Ascending aorta (tissue), 2 donors: ENCODE measurements at regions of chr12 and their contacts with region 1.

Region 1: GRCh38 chr12:11648831-11649702 is at the start of gene ETV6:
- DNase-seq: peak in 1 of 2 donors; percentile 90
- H3K4me3 ChIP-seq: peak within 1 kb of the TSS; percentile 73 to 89
- H3K27ac ChIP-seq: peak within 1 kb of the TSS; percentile 85 to 95
- H3K4me1 ChIP-seq: peaks cover 3 to 5% of the 10 kb centered on the region in 2 donors
- H3K27me3 ChIP-seq: no peaks in the 10 kb centered on the region
- CTCF ChIP-seq: no peak
- total RNA-seq, gene ETV6: 21.6 TPM

Region 2: GRCh38 chr12:11581179-11581755 is 67.8 kb before region 1 on chr12:
- intact Hi-C with region 1: loop called (anchors 2 kb)
- DNase-seq: peak in 1 of 2 donors; percentile 81
- H3K4me3 ChIP-seq: no peak overlapping the region
- H3K27ac ChIP-seq: peak overlapping the region; percentile 69 to 82
- H3K4me1 ChIP-seq: peaks cover 6 to 31% of the 10 kb centered on the region in 2 donors
- H3K27me3 ChIP-seq: no peaks in the 10 kb centered on the region
- CTCF ChIP-seq: peak; percentile 55 to 61 (median 59)

Region 3: DNA sequence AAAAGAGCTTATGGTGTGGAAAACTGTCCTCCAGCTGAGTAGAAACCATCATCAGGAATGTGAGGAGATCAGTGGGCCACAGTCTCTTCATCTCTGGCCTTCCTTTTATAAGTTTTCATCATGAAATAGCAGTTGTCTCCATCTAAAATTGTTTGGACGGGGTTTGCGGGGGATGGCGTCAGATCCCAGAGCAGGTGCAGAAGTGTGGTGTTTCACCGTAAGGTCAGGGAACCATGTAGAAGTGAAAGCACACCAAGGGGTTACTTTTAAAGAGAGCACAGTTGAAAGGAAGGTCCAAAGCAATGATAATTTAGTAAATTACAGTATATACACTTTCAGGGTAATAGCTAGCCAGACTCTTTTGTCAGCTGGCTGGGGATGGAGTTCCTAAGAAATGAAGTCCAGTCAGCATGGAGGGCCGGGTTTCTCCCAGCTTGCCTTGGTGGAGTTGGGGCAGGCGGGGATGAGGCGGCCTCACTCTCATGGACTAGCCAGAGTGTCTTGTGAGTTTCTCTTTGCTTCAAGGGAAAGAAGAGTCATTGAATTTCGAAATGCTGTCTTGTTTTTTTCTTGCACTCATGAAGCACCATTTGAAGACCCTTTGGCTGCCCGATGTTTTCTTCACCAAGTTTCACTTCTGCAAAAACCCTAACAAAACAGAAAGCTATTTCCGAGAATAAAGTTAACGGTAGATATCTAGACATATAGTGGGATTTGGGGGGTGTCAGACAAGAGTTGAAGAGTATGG is 101.0 kb after region 1 on chr12:
- intact Hi-C with region 1: loop called (anchors 2 kb)
- DNase-seq: no peak
- H3K4me3 ChIP-seq: no peak overlapping the region
- H3K27ac ChIP-seq: peak overlapping the region in 1 of 2 donors; percentile 13
- H3K4me1 ChIP-seq: peaks cover 12 to 41% of the 10 kb centered on the region in 2 donors
- H3K27me3 ChIP-seq: no peaks in the 10 kb centered on the region
- CTCF ChIP-seq: no peak

Region 4: DNA sequence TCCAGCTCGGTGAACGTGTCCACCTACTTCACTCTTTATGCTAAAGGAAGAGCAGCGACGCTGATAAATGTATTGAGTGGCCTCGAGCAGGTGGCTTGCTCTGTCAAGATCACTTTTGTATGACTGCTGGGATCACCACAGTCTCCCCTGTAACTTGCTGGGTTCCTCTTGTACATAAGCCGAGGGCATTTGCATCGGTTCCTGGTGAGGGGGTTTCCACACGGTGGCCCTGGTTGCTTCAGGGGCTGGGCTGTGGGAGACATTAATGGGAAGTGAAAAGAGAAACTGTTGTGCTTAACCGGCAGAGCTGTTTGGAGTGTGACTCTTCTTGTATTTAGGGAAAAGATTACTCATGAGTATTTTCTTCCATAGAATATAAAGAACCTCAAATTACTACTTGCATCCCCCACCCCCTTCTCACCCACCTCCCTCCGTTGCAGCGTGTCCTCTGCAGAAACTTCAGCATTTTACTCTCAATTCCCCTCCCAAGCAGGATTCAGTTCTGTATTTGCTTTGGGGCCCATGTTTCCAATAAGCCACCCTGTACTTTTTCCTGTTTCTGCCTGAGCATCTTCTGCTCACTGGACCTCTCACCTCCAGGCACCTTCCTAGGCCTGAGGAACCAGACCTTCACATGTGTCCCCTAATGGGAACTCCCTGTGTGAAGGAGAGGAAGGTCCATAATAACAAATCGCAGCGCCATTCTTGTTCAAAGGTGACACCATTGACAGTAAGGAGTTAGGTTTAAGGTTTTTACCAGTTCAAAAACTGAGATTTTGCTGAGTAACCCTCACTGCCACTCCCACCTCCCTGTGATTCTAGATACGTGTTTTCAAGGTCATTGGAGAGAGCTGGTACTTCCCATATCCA is 187.4 kb after region 1 on chr12:
- intact Hi-C with region 1: loop called (anchors 5 kb)
- DNase-seq: peak in 1 of 2 donors; percentile 76
- H3K4me3 ChIP-seq: no peak overlapping the region
- H3K27ac ChIP-seq: peak overlapping the region; percentile 50 to 55
- H3K4me1 ChIP-seq: peaks cover 10 to 80% of the 10 kb centered on the region in 2 donors
- H3K27me3 ChIP-seq: no peaks in the 10 kb centered on the region
- CTCF ChIP-seq: no peak

Region 5: GRCh38 chr12:11855983-11856374 is 206.9 kb after region 1 on chr12:
- intact Hi-C with region 1: no loop called
- DNase-seq: no peak
- H3K4me3 ChIP-seq: no peak overlapping the region
- H3K27ac ChIP-seq: peak overlapping the region; percentile 2 to 7
- H3K4me1 ChIP-seq: no peaks in the 10 kb centered on the region
- H3K27me3 ChIP-seq: no peaks in the 10 kb centered on the region
- CTCF ChIP-seq: no peak

Region 6: DNA sequence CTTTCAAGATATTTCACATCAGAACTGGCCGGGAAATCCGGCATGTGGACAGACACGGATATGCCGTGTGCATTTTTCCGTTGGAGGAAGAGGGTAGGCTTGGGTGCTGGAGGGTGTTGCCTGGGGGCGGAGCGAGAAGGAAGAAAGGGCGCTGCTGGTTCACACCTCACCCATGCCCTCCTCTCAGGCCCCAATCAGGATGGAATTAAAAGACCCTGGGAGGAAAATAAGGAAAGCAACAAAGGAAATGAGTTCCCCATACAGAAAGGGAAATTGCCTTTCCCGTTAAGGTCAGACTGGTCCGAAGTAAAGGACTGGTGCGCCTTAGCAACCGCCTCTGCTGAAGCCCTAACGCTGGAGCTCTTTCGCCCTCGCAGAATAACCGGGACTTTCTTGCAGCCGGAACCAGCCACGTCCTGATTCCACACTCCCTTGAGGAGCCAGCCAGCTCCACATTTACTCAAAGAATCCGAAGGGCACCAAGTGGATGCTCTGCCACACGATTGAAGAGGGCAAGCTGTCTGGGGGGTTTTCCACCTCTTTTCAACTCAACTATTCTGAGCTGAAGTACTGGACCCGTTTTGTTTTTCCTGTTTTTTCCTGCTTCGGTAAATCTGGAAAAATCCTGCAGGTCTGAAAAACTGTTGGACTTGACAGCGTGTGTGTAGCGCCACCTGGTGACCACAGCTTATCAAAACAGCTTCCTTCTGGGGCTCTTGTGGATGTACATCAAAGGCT is 384.0 kb after region 1 on chr12:
- intact Hi-C with region 1: loop called (anchors 2 kb)
- DNase-seq: peak in 1 of 2 donors; percentile 86
- H3K4me3 ChIP-seq: peak overlapping the region; percentile 53 to 60
- H3K27ac ChIP-seq: peak overlapping the region; percentile 69 to 71
- H3K4me1 ChIP-seq: peaks cover 0 to 6% of the 10 kb centered on the region in 2 donors
- H3K27me3 ChIP-seq: no peaks in the 10 kb centered on the region
- CTCF ChIP-seq: peak; percentile 82 to 90 (median 88)